Activated CD8-positive, alpha-beta memory T cell treated with anti-CD3 and anti-CD28 coated beads, Interleukin-2, amount 10 ng/mL, durations not matched to agents 7 days and 5 days (primary cell): ENCODE measurements at regions of chr22 and their contacts with region 1.

Region 1: DNA sequence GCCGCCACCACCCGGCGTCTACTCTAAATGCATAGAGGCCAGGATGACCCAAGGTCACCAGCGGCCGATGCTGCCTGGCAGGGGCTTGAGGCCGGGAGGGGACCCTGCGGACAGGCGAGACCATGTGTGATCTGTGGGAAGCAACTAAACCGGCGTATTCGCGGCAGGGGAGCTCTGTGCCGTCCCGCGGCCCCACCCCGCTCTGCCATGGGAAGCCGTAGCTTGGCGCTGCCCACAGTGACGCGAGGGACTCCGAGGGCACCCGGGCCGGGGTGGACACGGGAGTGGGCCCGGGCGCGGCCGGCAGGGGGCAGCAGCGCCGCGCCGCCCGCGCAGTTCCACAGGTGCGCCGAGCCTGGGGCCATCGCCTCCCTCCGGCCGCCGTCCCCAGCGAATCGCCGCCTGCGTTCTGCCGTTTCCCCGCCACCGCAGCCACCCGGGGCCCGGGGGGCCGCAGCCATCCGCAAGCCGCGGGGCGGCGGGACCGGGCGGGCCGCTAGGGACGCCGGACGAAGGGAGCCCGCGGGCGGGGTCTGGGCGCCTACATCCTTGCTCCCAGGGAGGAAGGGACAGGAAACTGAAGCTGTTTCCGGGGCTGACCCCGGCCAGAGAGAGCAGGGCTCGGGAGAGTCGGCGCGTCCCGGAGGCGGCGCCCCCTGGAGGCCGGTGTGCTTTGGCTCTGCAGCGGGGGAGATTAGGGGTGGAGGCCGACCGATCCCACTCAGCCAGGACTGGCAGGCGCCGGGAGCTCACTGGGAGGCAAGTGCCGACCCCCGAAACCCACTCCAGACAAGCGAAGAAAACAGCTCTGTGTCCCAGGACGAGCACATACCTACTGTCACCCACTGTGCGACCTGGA is 12.5 kb upstream of the HDHD5 start:
- DNase-seq: peak; percentile 87
- ATAC-seq: peak; percentile 95
- H3K4me3 Mint-ChIP-seq: peak overlapping the region; percentile 78
- H3K27ac Mint-ChIP-seq: peak overlapping the region; percentile 80
- H3K4me1 Mint-ChIP-seq: peaks cover 7% of the 10 kb centered on the region
- H3K27me3 Mint-ChIP-seq: peaks cover 7% of the 10 kb centered on the region

Region 2: DNA sequence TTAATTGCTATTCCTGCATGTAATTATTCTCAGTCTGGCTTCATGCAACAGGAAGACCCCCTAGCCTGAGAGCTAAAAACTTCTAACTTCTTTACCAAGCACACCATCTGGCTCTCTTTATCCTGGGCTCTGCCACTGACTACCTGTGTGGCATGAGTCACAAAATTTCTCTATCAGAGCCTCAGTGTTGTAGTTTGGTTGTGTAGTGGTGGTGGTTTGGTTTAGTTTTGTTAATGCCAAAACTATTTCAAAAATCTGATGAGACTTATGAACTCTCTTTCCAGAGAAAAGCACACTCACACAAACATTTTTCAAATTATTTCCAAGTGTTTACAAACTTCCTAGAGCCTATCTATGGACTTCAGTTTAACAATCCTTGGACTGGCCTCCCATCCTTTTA is 94.3 kb before region 1 on chr22:
- CTCF ChIA-PET with region 1: interaction called, 93 read pairs
- DNase-seq: no peak
- ATAC-seq: no peak
- H3K4me3 Mint-ChIP-seq: no peak overlapping the region
- H3K27ac Mint-ChIP-seq: no peak overlapping the region
- H3K4me1 Mint-ChIP-seq: peaks cover 17% of the 10 kb centered on the region
- H3K27me3 Mint-ChIP-seq: peaks cover 50% of the 10 kb centered on the region

Region 3: DNA sequence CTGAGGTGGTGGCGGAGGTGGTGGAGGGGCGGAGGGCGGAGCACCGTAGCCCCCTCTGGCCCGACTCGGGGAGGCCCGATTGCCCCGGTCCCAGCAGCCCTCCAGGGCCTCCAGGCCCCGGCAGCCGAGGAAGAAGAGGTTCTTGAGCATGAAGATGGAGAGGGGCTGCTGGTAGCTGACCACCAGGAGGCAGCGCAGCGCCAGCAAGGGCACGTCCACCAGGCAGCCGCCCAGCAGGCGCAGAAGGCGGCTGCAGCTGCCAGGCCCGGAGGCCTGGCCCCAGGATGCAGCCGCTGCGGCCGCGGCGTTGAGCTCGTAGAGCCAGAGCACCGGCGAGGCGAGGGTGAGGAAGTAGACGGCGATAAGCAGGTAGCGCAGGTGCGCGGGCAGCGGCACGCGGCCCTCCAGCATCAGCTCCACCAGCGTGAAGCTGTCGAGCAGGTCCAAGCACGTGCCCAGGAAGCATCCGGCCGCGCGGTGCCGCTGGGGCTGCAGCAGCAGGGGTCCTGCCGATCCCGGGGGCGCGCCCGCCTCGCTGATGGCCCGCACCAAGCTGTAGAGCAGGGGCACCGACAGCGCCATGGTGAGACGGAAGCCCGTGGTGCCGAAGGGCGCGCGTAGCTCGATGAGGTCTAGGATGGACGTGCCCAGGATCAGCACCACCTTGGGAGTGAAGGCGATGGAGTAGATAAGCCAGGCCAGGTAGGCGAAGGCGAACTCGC is 51.9 kb before region 1 on chr22:
- CTCF ChIA-PET with region 1: interaction called, 12 read pairs
- DNase-seq: no peak
- ATAC-seq: no peak
- H3K4me3 Mint-ChIP-seq: no peak overlapping the region
- H3K27ac Mint-ChIP-seq: peak overlapping the region; percentile 52
- H3K4me1 Mint-ChIP-seq: peaks cover 42% of the 10 kb centered on the region
- H3K27me3 Mint-ChIP-seq: peaks cover 34% of the 10 kb centered on the region

Region 4: DNA sequence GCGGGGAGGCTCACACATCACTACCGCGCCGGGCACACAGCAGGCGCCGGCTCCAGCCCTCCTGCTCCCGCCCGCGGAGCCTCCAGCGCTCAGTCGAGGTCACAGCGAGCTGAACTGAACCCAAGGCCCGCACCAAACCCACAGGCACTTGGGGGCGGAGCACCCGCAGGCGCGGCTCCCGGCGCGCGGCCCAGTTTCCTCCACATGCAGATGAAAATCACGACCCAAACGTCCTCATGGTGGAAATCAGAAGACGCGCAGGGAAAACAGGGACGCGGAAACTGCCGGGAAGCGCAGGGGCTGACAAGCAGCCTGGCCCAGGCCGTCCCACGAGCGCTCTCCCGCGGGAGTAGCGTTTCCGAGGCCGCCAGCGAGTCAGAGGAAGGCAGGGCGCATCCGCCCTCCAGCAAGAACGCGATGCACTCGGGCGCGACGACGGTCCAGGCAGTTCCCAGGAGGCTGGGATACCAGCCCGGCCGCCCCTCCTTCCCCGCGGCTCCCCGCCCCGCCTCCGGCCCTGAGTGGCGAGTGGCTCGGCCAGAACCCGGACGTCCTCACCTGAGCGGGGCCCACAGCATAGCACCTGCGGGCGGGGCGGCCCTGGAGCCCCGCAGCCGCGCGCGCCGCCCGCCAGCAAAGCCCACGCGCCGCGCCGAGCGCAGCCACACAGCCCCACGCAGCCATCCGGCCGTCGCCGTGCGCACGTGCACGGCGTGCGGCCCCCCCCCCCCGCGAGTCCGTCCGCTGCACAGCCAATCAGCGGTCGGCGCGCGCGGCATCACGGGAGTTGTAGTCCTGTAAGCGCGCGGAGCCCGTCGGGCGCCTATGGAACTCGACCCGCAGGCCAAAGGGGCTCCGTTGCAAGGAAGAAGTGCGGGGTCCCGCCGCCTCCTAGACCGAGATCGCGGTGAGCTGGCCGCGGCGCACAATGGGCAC is 12.7 kb before region 1 on chr22 and contains the start of gene HDHD5:
- CTCF ChIA-PET with region 1: interaction called, 87 read pairs
- DNase-seq: peak; percentile 91
- ATAC-seq: peak; percentile 86
- H3K4me3 Mint-ChIP-seq: peak within 1 kb of the TSS; percentile 82
- H3K27ac Mint-ChIP-seq: peak within 1 kb of the TSS; percentile 76
- H3K4me1 Mint-ChIP-seq: peaks cover 30% of the 10 kb centered on the region
- H3K27me3 Mint-ChIP-seq: no peaks in the 10 kb centered on the region
- total RNA-seq, gene HDHD5: 23.8 to 31.6 TPM

Region 5: GRCh38 chr22:17201285-17201945 is 29.9 kb after region 1 on chr22:
- CTCF ChIA-PET with region 1: interaction called, 20 read pairs
- DNase-seq: no peak
- ATAC-seq: no peak
- H3K4me3 Mint-ChIP-seq: no peak overlapping the region
- H3K27ac Mint-ChIP-seq: no peak overlapping the region
- H3K4me1 Mint-ChIP-seq: no peaks in the 10 kb centered on the region
- H3K27me3 Mint-ChIP-seq: no peaks in the 10 kb centered on the region

Region 6: GRCh38 chr22:17266251-17266971 is 94.9 kb after region 1 on chr22:
- CTCF ChIA-PET with region 1: interaction called, 10 read pairs
- DNase-seq: peak; percentile 49
- ATAC-seq: peak; percentile 80
- H3K4me3 Mint-ChIP-seq: no peak overlapping the region
- H3K27ac Mint-ChIP-seq: peak overlapping the region; percentile 31
- H3K4me1 Mint-ChIP-seq: peaks cover 31% of the 10 kb centered on the region
- H3K27me3 Mint-ChIP-seq: no peaks in the 10 kb centered on the region